Left lung (tissue), 14 donors: ENCODE measurements at regions of chr11 and their contacts with region 1.

Region 1: DNA sequence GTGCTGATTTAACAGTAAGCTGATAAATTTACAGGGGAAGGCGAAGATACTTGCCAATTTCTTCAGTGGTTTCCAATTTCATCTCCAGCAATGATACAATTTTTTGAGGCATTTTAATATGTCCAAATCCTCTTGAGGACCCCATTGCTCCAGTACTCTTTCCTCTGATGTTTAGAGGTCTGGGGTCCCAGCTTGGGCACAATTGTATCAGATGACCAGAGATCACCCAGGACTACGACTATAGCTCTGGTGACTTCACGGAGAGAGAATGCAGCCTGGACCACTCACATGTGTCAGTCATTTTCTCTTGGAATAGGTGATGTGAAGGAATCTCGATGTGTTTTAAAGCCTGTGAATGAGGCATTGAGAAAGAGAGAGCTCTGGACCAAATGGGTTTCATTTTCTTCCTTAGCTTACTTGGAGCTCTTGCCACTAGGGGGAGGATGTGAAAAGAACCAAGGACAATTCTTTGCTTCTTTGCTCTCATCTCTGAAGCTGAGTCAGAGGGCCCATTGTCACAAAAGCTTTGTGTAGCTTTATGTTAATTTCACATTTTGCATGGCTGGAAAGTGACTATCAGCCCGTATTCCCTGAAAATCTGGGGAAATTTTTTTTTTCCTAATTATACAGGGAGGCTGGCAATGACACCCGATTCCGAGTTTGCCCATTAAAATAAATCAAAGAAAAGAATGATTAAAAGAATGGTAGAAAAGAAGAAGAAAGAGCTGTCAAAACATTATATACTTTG is 6.7 kb upstream of the CCDC90B start:
- DNase-seq: peak in 2 of 4 donors; percentile 46 to 76
- ATAC-seq: peak; percentile 85
- H3K4me3 ChIP-seq: no peak overlapping the region
- H3K27ac ChIP-seq: no peak overlapping the region
- H3K4me1 ChIP-seq: peaks cover 0 to 7% of the 10 kb centered on the region in 2 donors
- H3K27me3 ChIP-seq: no peaks in the 10 kb centered on the region
- CTCF ChIP-seq: peak; percentile 67 to 74

Region 2: GRCh38 chr11:82945682-82946081 is 347.2 kb before region 1 on chr11:
- intact Hi-C with region 1: no loop called
- DNase-seq: no peak
- ATAC-seq: no peak
- H3K4me3 ChIP-seq: no peak overlapping the region
- H3K27ac ChIP-seq: no peak overlapping the region
- H3K4me1 ChIP-seq: no peaks in the 10 kb centered on the region
- H3K27me3 ChIP-seq: no peaks in the 10 kb centered on the region
- CTCF ChIP-seq: no peak

Region 3: GRCh38 chr11:83641511-83641910 is 348.6 kb after region 1 on chr11:
- intact Hi-C with region 1: no loop called
- DNase-seq: peak in 3 of 4 donors; percentile 12 to 36 (median 28)
- ATAC-seq: peak; percentile 92
- H3K4me3 ChIP-seq: no peak overlapping the region
- H3K27ac ChIP-seq: no peak overlapping the region
- H3K4me1 ChIP-seq: no peaks in the 10 kb centered on the region
- H3K27me3 ChIP-seq: no peaks in the 10 kb centered on the region
- CTCF ChIP-seq: no peak

Region 4: DNA sequence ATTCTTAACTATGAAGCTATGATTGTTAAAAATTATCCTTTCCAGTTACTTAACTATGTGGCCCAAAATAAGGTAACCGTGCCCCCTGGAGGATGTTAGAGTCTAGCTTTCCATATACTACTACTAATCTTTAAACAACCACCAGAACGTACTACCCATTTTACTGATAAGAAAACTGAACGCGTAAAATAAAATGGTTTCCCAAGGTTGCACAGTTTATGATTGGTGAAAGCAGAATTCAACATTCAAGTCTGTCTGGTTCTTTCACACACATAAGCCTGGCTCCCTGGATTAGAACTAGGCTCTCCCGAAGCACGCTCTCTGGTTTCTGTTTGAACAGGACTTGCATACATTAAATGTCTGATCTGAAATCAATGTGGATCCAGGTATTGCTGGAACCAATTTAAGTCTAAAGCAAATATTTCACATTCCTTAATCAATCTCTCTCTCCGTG is 431.2 kb after region 1 on chr11:
- intact Hi-C with region 1: loop called in 1 of 2 experiments (anchors 10 kb)
- DNase-seq: peak in 2 of 4 donors; percentile 57 to 80
- ATAC-seq: peak; percentile 82
- H3K4me3 ChIP-seq: peak overlapping the region in 1 of 2 donors; percentile 23
- H3K27ac ChIP-seq: no peak overlapping the region
- H3K4me1 ChIP-seq: no peaks in the 10 kb centered on the region
- H3K27me3 ChIP-seq: no peaks in the 10 kb centered on the region
- CTCF ChIP-seq: no peak

Region 5: DNA sequence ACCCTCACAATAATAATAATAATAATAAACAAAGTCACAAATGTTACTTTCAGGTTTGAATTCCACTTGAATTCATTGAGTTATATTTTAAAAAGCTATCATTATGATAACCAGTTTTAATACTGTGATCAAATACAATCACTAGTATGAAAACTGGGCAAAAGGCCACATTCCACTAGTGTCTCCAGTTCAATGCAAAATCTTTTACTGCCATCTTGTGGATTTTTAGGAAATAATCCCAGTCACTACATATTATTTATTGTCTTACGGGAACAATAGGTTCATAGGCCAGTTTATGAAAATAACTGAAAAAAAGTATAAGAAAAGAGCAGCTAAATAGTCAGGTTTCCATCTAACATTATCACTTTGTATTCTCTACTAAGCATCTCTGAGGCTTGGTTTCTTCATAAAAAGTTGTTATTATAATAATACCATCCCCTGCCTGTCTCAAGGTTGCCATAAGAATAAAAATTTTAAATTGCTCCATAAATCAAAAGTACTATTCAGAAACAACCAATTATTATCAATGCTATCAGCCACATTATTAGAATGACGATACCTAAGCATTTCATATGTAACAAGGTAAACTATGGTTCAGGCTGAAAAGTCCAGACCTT is 527.2 kb after region 1 on chr11:
- intact Hi-C with region 1: loop called in 1 of 2 experiments (anchors 10 kb)
- DNase-seq: peak in 2 of 4 donors; percentile 45 to 75
- ATAC-seq: peak; percentile 75
- H3K4me3 ChIP-seq: no peak overlapping the region
- H3K27ac ChIP-seq: no peak overlapping the region
- H3K4me1 ChIP-seq: no peaks in the 10 kb centered on the region
- H3K27me3 ChIP-seq: no peaks in the 10 kb centered on the region
- CTCF ChIP-seq: peak in 1 of 2 donors; percentile 48